ENCODE measurements at regions of chr11 and their contacts with region 1.

Region 1: GRCh38 chr11:9601037-9601875 is 27.8 kb downstream of the WEE1 start:
- DNase-seq: peak; percentile 6 to 84 (median 40)
- ATAC-seq: peak; percentile 82 to 95 (median 94)
- H3K4me3 ChIP-seq: peak overlapping the region; percentile 25 to 49
- H3K4me3 Mint-ChIP-seq: peak overlapping the region; percentile 37 to 80 (median 72)
- H3K27ac ChIP-seq: peak overlapping the region; percentile 72
- H3K27ac Mint-ChIP-seq: peak overlapping the region; percentile 85 to 96
- H3K4me1 ChIP-seq: peaks cover 3 to 26% of the 10 kb centered on the region in 2 experiments
- H3K4me1 Mint-ChIP-seq: peaks cover 19 to 26% (median 25%) of the 10 kb centered on the region in 3 donors
- H3K27me3 ChIP-seq: no peaks in the 10 kb centered on the region
- H3K27me3 Mint-ChIP-seq: no peaks in the 10 kb centered on the region

Region 2: DNA sequence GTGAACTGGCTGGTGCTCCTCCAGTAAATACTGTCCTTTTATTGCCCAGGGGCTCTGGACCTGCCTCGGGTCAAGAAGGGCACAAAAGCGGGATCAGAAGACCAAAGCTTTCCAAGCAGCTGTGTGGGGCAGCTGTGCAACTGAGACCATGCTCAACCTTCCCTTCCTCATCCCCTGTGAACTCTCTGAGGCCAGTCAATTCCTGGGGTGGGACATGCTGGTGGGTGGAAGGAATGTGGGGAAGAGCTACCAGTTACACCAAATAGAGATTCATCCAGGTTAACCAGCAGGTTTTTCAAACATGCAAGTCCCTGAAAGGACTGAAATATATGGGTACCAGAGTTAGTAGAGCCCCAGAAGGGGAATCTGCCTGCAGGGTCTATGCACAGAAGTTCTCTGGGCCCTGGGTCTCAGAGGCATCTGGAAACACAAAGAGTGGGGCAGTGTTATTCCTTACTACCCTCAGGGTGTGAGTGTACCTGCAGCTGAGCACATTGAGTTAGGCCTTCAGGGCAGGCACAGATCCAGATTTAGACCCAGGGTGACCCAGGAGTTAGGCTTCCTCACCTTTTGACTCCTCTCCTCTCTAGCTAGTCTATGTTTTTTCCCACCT is 18.6 kb after region 1 on chr11:
- CTCF ChIA-PET with region 1: no interaction called
- POLR2A ChIA-PET with region 1: no interaction called
- DNase-seq: no peak
- ATAC-seq: no peak
- H3K4me3 ChIP-seq: no peak overlapping the region
- H3K4me3 Mint-ChIP-seq: no peak overlapping the region
- H3K27ac ChIP-seq: no peak overlapping the region
- H3K27ac Mint-ChIP-seq: no peak overlapping the region
- H3K4me1 ChIP-seq: no peaks in the 10 kb centered on the region
- H3K4me1 Mint-ChIP-seq: peaks cover 0 to 11% (median under 1%) of the 10 kb centered on the region in 3 donors
- H3K27me3 ChIP-seq: no peaks in the 10 kb centered on the region
- H3K27me3 Mint-ChIP-seq: no peaks in the 10 kb centered on the region

Region 3: GRCh38 chr11:10272132-10272531 is 670.9 kb after region 1 on chr11:
- CTCF ChIA-PET with region 1: no interaction called
- POLR2A ChIA-PET with region 1: interaction called in 1 of 2 experiments, 11 read pairs
- DNase-seq: no peak
- ATAC-seq: peak in 2 of 4 experiments; percentile 40 to 57
- H3K4me3 ChIP-seq: no peak overlapping the region
- H3K4me3 Mint-ChIP-seq: no peak overlapping the region
- H3K27ac ChIP-seq: no peak overlapping the region
- H3K27ac Mint-ChIP-seq: no peak overlapping the region
- H3K4me1 ChIP-seq: no peaks in the 10 kb centered on the region
- H3K4me1 Mint-ChIP-seq: peaks cover 7 to 24% (median 11%) of the 10 kb centered on the region in 3 donors
- H3K27me3 ChIP-seq: no peaks in the 10 kb centered on the region
- H3K27me3 Mint-ChIP-seq: no peaks in the 10 kb centered on the region

Measured in T-cell (primary cell).